Heart right ventricle (tissue), 16 donors: ENCODE measurements at regions of chr5 and their contacts with region 1.

Region 1: DNA sequence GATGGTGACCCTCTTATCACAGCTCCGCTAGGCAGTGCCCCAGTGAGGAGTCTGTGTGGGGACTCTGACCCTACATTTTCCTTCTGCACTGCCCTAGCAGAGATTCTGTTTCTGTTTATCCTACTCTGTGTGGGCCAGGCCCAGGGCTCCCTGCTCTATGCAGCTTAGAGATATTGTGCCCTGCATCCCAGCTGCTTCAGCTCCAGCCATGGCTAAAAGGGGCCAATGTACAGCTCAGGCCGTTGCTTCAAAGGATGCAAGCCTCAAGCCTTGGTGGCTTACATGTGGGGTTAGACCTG is 2030.7 kb upstream of the CDH9 start:
- DNase-seq: no peak
- ATAC-seq: no peak
- H3K4me3 ChIP-seq: no peak overlapping the region
- H3K27ac ChIP-seq: no peak overlapping the region
- H3K4me1 ChIP-seq: no peaks in the 10 kb centered on the region
- H3K27me3 ChIP-seq: no peaks in the 10 kb centered on the region
- CTCF ChIP-seq: no peak

Region 2: DNA sequence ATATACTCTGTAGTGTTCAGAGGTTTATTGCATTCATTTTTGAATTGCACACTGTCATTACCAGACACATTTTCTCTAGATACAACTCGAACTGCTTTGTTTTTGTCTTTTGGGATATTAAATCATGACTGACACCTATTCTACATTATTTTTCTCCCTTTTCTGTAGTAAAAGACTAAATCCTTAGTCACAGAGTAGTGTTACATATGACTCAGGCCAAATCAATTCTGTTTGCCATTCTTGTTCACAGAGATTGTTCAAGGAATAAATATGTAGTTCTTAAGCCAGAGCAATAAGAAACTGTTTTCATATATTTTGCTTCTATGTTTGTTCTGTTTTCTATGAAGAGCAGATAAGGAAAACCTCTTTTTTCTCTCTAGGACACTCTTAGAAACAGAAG is 128.6 kb after region 1 on chr5:
- intact Hi-C with region 1: no loop called
- DNase-seq: no peak
- ATAC-seq: no peak
- H3K4me3 ChIP-seq: no peak overlapping the region
- H3K27ac ChIP-seq: no peak overlapping the region
- H3K4me1 ChIP-seq: no peaks in the 10 kb centered on the region
- H3K27me3 ChIP-seq: no peaks in the 10 kb centered on the region
- CTCF ChIP-seq: no peak

Region 3: DNA sequence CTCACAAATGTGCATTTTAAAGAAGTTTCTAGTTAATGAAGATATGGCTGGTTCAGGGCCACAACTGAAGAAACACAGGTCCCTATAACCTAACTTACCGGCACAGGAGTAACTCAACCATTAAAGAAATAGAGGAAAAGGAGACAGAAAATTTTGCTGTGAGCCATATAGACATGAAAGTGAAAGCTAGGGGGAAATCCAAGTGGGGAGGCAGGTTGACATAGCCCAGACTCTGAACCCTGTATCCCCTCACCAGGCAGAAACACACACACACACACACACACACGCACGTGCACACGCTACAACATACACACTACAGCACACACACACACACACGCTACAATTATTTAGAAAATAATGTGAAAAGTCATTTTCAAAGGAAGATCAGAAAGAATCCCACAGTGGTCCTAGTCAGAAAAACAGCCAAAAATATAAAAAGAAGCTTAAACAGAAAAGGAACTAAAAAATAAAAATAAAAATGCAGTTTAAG is 1268.1 kb after region 1 on chr5:
- intact Hi-C with region 1: loop called in 1 of 10 experiments (anchors 5 kb)
- DNase-seq: no peak
- ATAC-seq: no peak
- H3K4me3 ChIP-seq: no peak overlapping the region
- H3K27ac ChIP-seq: no peak overlapping the region
- H3K4me1 ChIP-seq: no peaks in the 10 kb centered on the region
- H3K27me3 ChIP-seq: no peaks in the 10 kb centered on the region
- CTCF ChIP-seq: no peak